B cell (primary cell): ENCODE measurements at regions of chr19 and their contacts with region 1.

Region 1: DNA sequence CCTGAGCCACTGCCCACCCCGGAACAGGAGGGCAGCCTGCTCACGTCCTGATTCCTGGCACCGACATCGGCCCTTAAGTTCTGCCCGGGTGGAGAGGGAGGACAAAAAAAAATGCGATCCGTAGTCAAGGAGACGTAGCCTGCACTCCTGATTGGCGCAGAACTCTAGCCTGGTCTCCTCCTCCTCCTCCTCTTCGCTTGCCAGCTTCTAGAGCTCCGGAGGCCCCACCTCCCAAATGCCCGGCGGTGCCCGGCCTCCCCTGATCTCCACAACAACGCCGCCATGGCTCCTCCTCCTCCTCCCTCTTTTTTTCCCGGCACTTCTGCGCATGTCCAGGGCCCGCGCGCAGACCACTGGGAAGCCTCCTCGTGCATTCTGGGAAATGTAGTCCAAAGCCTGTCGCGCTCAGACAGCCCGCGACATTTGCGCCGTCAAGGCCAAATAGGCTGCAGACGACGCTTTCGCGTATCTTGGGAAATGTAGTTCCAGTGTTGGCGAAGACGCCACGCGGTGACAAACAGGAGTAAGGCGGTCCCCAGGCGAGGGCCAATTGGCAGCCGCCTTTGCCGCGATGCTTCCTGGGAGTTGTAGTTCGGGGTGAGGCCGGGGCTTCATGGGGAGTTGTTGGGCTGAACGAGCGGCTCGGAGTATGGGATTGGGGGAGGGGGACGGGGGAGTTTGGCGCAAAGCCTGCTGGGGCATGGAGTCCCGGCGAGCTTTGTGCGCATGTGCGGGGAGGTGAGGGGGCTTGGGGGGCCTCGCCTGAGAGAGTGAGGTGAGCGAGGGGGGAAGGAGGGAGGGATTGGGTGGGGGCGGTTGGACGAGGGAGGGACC is at the start of gene ZNF444:
- DNase-seq: peak; percentile 99
- ATAC-seq: peak; percentile 85
- H3K4me3 ChIP-seq: peak within 1 kb of the TSS; percentile 61 to 83 (median 79)
- H3K4me3 Mint-ChIP-seq: peak within 1 kb of the TSS; percentile 87
- H3K27ac ChIP-seq: peak within 1 kb of the TSS; percentile 84 to 89
- H3K27ac Mint-ChIP-seq: peak within 1 kb of the TSS; percentile 93
- H3K4me1 ChIP-seq: peaks cover 13 to 17% of the 10 kb centered on the region in 2 donors
- H3K4me1 Mint-ChIP-seq: peaks cover 32% of the 10 kb centered on the region
- H3K27me3 ChIP-seq: no peaks in the 10 kb centered on the region
- H3K27me3 Mint-ChIP-seq: no peaks in the 10 kb centered on the region
- CTCF ChIP-seq: no peak
- total RNA-seq, gene ZNF444: 32.0 and 37.7 TPM in 2 replicates

Region 2: GRCh38 chr19:56086671-56087430 is 53.9 kb before region 1 on chr19:
- CTCF ChIA-PET with region 1: no interaction called
- POLR2A ChIA-PET with region 1: no interaction called
- intact Hi-C with region 1: no loop called
- DNase-seq: no peak
- ATAC-seq: no peak
- H3K4me3 ChIP-seq: no peak overlapping the region
- H3K4me3 Mint-ChIP-seq: no peak overlapping the region
- H3K27ac ChIP-seq: no peak overlapping the region
- H3K27ac Mint-ChIP-seq: no peak overlapping the region
- H3K4me1 ChIP-seq: peaks cover 0 to 2% of the 10 kb centered on the region in 2 donors
- H3K4me1 Mint-ChIP-seq: peaks cover 3% of the 10 kb centered on the region
- H3K27me3 ChIP-seq: no peaks in the 10 kb centered on the region
- H3K27me3 Mint-ChIP-seq: no peaks in the 10 kb centered on the region
- CTCF ChIP-seq: no peak

Region 3: GRCh38 chr19:56105090-56105701 is 35.6 kb before region 1 on chr19:
- CTCF ChIA-PET with region 1: interaction called, 5 read pairs
- POLR2A ChIA-PET with region 1: interaction called, 3 read pairs
- intact Hi-C with region 1: loop called (anchors 1 kb)
- DNase-seq: peak; percentile 83
- ATAC-seq: peak; percentile 75
- H3K4me3 ChIP-seq: peak overlapping the region in 3 of 5 experiments; percentile 5 to 25 (median 21)
- H3K4me3 Mint-ChIP-seq: peak overlapping the region; percentile 64
- H3K27ac ChIP-seq: peak overlapping the region; percentile 54 to 72
- H3K27ac Mint-ChIP-seq: peak overlapping the region; percentile 80
- H3K4me1 ChIP-seq: peaks cover 39 to 41% of the 10 kb centered on the region in 2 donors
- H3K4me1 Mint-ChIP-seq: peaks cover 53% of the 10 kb centered on the region
- H3K27me3 ChIP-seq: no peaks in the 10 kb centered on the region
- H3K27me3 Mint-ChIP-seq: no peaks in the 10 kb centered on the region
- CTCF ChIP-seq: peak; percentile 74

Region 4: GRCh38 chr19:56111601-56112312 is 29.0 kb before region 1 on chr19:
- CTCF ChIA-PET with region 1: interaction called, 3 read pairs
- POLR2A ChIA-PET with region 1: interaction called, 5 read pairs
- intact Hi-C with region 1: loop called (anchors 1 kb)
- DNase-seq: peak; percentile 91
- ATAC-seq: peak; percentile 96
- H3K4me3 ChIP-seq: peak overlapping the region in 4 of 5 experiments; percentile 26 to 53 (median 40)
- H3K4me3 Mint-ChIP-seq: peak overlapping the region; percentile 88
- H3K27ac ChIP-seq: peak overlapping the region; percentile 73 to 80
- H3K27ac Mint-ChIP-seq: peak overlapping the region; percentile 94
- H3K4me1 ChIP-seq: peaks cover 73 to 75% of the 10 kb centered on the region in 2 donors
- H3K4me1 Mint-ChIP-seq: peaks cover 78% of the 10 kb centered on the region
- H3K27me3 ChIP-seq: no peaks in the 10 kb centered on the region
- H3K27me3 Mint-ChIP-seq: no peaks in the 10 kb centered on the region
- CTCF ChIP-seq: no peak

Region 5: DNA sequence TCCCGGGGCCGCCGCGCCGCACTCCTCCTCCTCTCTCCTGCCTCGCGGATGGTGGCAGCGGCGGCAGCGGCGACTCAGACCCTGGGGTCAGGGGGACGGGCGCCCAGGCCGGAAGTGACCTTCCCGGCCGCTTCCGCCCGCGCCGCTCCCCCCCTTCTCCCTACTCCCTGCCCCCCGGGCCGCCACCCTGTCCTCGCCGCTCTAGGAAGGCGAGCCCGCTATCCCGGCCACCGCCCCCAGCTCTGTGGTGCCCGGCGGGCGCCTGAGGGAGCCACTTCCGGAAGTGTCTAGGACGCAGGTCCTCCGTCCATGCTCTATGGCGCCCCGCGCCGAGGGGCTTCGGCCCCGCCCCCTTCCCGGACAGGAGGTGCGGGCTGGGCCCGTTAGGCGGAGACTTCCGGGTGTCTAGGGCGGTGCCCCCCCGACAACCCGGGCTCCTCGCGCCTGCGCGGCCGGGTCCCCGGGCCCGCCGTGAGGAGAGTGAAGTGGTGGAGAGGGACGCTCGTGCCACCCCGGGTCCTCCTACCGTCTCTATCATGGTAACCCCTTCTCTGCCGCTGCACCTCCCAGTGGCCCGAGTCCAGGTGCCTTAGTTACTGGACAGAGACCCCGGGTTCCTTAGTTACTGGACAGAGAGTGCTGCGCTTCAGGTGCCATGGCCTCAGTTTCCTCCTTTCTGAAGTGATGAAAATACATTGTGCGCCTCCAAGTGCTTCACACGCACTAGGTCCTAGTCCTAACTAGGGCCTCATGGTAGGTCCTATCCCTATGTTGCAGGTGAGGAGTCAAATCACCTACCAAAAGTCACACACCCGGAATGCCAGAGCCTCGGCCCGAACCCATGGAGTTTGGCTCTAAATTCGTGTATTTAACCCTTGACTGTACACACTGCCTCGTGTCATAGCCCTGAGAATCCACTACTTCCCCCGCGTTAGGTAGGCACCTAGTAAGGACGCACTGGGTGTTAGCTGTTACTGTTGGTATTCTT is 19.3 kb before region 1 on chr19 and contains the start of gene ZNF787:
- CTCF ChIA-PET with region 1: interaction called, 3 read pairs
- POLR2A ChIA-PET with region 1: interaction called, 13 read pairs
- intact Hi-C with region 1: loop called (anchors 1 kb)
- DNase-seq: peak; percentile 98
- ATAC-seq: peak; percentile 83
- H3K4me3 ChIP-seq: peak within 1 kb of the TSS; percentile 37 to 95 (median 76)
- H3K4me3 Mint-ChIP-seq: peak within 1 kb of the TSS; percentile 94
- H3K27ac ChIP-seq: peak within 1 kb of the TSS; percentile 91 to 99
- H3K27ac Mint-ChIP-seq: peak within 1 kb of the TSS; percentile 99
- H3K4me1 ChIP-seq: peaks cover 18 to 29% of the 10 kb centered on the region in 2 donors
- H3K4me1 Mint-ChIP-seq: peaks cover 40% of the 10 kb centered on the region
- H3K27me3 ChIP-seq: no peaks in the 10 kb centered on the region
- H3K27me3 Mint-ChIP-seq: no peaks in the 10 kb centered on the region
- CTCF ChIP-seq: no peak
- total RNA-seq, gene ZNF787: 47.7 and 47.9 TPM in 2 replicates

Region 6: GRCh38 chr19:56314562-56315077 is 173.8 kb after region 1 on chr19 and contains the start of gene ZSCAN5A:
- CTCF ChIA-PET with region 1: no interaction called
- POLR2A ChIA-PET with region 1: no interaction called
- intact Hi-C with region 1: loop called (anchors 1 kb)
- DNase-seq: peak; percentile 99
- ATAC-seq: peak; percentile 77
- H3K4me3 ChIP-seq: peak within 1 kb of the TSS; percentile 67 to 84 (median 80)
- H3K4me3 Mint-ChIP-seq: peak within 1 kb of the TSS; percentile 95
- H3K27ac ChIP-seq: peak within 1 kb of the TSS; percentile 95 to 99
- H3K27ac Mint-ChIP-seq: peak within 1 kb of the TSS; percentile 94
- H3K4me1 ChIP-seq: peaks cover 12 to 13% of the 10 kb centered on the region in 2 donors
- H3K4me1 Mint-ChIP-seq: peaks cover 17% of the 10 kb centered on the region
- H3K27me3 ChIP-seq: no peaks in the 10 kb centered on the region
- H3K27me3 Mint-ChIP-seq: no peaks in the 10 kb centered on the region
- CTCF ChIP-seq: no peak
- total RNA-seq, gene ZSCAN5A: 20.5 and 24.8 TPM in 2 replicates